ENCODE measurements at regions of chr17 and their contacts with region 1.

Region 1: GRCh38 chr17:45228763-45229539 is 7.3 kb downstream of the FMNL1 start:
- DNase-seq: peak; percentile 75
- H3K4me3 Mint-ChIP-seq: peak overlapping the region; percentile 98
- H3K27ac Mint-ChIP-seq: peak overlapping the region; percentile 97
- H3K4me1 Mint-ChIP-seq: peaks cover 80% of the 10 kb centered on the region
- H3K27me3 Mint-ChIP-seq: no peaks in the 10 kb centered on the region

Region 2: GRCh38 chr17:45038728-45039634 is 190.0 kb before region 1 on chr17:
- intact Hi-C with region 1: no loop called
- DNase-seq: no peak
- H3K4me3 Mint-ChIP-seq: no peak overlapping the region
- H3K27ac Mint-ChIP-seq: no peak overlapping the region
- H3K4me1 Mint-ChIP-seq: peaks cover 16% of the 10 kb centered on the region
- H3K27me3 Mint-ChIP-seq: no peaks in the 10 kb centered on the region

Region 3: GRCh38 chr17:45247429-45248131 is 18.6 kb after region 1 on chr17:
- intact Hi-C with region 1: loop called (anchors 1 kb)
- DNase-seq: peak; percentile 95
- H3K4me3 Mint-ChIP-seq: peak overlapping the region; percentile 91
- H3K27ac Mint-ChIP-seq: peak overlapping the region; percentile 91
- H3K4me1 Mint-ChIP-seq: peaks cover 53% of the 10 kb centered on the region
- H3K27me3 Mint-ChIP-seq: no peaks in the 10 kb centered on the region

Region 4: DNA sequence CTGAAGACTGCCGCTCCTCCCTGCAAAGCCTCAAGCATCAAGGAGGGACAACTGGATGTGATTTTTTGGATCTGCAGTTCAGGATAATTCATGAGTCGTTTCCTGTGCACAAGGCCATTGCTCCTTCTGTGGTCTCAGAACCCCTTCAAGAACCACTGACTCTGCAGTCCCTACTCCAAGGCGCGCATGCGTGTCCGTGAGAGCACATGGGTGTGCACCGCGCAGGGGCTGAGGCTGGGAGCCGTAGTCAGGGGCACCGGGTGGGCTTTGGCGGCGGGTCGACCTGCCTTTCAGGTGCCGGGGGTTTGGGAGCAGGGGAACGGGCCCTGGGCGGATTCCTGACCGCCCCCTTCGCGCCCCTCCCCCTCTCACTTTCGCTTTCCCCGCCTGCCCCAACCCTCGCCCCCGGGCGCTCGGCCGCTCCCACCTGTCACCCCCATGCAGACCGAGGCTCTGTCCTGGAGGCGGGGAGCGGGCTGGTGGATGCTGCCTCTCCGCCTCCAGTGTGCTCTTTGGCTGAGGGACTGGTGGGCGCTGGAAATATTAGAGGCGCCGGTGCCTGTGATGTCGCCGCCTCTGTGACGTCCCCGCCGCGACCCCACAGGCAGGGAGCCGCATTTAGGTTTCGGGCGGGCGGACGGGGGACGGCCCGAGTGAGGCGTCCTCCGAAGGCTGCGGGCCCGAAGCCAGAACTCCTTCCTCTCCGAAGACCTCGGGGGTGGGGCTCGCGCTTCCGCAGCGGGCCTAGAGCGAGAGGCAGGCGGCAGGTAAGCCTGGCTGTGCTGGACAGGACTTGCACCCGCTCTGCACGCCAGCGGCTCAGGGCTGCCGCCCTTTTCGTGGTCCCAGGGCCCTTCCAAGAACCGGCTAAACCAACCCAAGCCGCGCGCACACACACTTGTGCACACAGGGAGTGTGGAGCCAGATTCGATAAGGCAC is 32.9 kb after region 1 on chr17 and contains the start of gene SPATA32:
- intact Hi-C with region 1: no loop called
- DNase-seq: peak; percentile 52
- H3K4me3 Mint-ChIP-seq: peak within 1 kb of the TSS; percentile 53
- H3K27ac Mint-ChIP-seq: peak within 1 kb of the TSS; percentile 40
- H3K4me1 Mint-ChIP-seq: peaks cover 25% of the 10 kb centered on the region
- H3K27me3 Mint-ChIP-seq: no peaks in the 10 kb centered on the region
- total RNA-seq, gene SPATA32: 0.37 and 0.67 TPM in 2 replicates

Measured in activated T-helper 2 cell treated with anti-CD3 and anti-CD28 coated beads, Interferon-gamma antibody, Interleukin-2, Interleukin-4, amounts not matched to agents 10 μg/mL and 5 μg/mL and 100 μg/mL, durations not matched to agents 14 hours and 24 hours and 36 hours (primary cell).